ENCODE measurements at regions of chr21 and their contacts with region 1.

Region 1: GRCh38 chr21:46144464-46145070 is 10.8 kb downstream of the FTCD start:
- DNase-seq: no peak
- H3K4me3 Mint-ChIP-seq: no peak overlapping the region
- H3K27ac Mint-ChIP-seq: peak overlapping the region; percentile 76
- H3K4me1 Mint-ChIP-seq: peaks cover 13% of the 10 kb centered on the region
- H3K27me3 Mint-ChIP-seq: no peaks in the 10 kb centered on the region

Region 2: GRCh38 chr21:45923146-45923545 is 221.4 kb before region 1 on chr21:
- CTCF ChIA-PET with region 1: no interaction called
- intact Hi-C with region 1: no loop called
- DNase-seq: peak; percentile 79
- H3K4me3 Mint-ChIP-seq: no peak overlapping the region
- H3K27ac Mint-ChIP-seq: no peak overlapping the region
- H3K4me1 Mint-ChIP-seq: peaks cover 22% of the 10 kb centered on the region
- H3K27me3 Mint-ChIP-seq: no peaks in the 10 kb centered on the region

Region 3: GRCh38 chr21:45973659-45974072 is 170.9 kb before region 1 on chr21:
- CTCF ChIA-PET with region 1: interaction called, 11 read pairs
- intact Hi-C with region 1: loop called (anchors 1 kb)
- DNase-seq: peak; percentile 93
- H3K4me3 Mint-ChIP-seq: peak overlapping the region; percentile 70
- H3K27ac Mint-ChIP-seq: peak overlapping the region; percentile 66
- H3K4me1 Mint-ChIP-seq: peaks cover 20% of the 10 kb centered on the region
- H3K27me3 Mint-ChIP-seq: peaks cover 16% of the 10 kb centered on the region

Region 4: DNA sequence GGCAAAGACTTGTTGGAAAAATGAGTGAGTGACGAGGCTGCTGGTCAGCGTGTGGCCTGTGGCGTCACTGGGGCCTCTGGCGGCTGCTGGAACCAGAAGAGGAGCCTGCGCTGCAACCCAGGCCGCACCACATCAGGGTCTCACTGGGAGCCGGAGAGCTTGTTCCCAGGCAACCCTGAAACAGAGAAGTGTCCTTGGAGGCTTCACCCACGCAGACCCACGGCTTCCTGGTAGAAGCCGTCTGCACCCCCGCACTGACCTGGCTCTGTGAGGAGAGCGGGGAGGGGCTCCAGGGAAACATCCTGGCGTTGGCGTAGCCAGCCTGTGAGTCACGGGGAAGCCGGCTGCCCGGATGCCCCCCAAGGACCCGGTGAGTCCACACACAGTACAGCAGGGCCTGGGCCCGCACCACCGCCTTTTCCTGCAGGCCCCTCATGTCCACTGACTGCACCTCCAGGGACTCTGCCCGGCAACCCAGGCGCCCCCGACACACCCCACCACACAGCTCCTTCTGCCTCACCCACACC is 105.6 kb before region 1 on chr21:
- CTCF ChIA-PET with region 1: no interaction called
- intact Hi-C with region 1: no loop called
- DNase-seq: no peak
- H3K4me3 Mint-ChIP-seq: no peak overlapping the region
- H3K27ac Mint-ChIP-seq: no peak overlapping the region
- H3K4me1 Mint-ChIP-seq: no peaks in the 10 kb centered on the region
- H3K27me3 Mint-ChIP-seq: peaks cover 3% of the 10 kb centered on the region

Region 5: GRCh38 chr21:46184625-46185555 is 40.3 kb after region 1 on chr21:
- CTCF ChIA-PET with region 1: no interaction called
- intact Hi-C with region 1: loop called (anchors 2 kb)
- DNase-seq: peak; percentile 66
- H3K4me3 Mint-ChIP-seq: peak overlapping the region; percentile 82
- H3K27ac Mint-ChIP-seq: peak overlapping the region; percentile 73
- H3K4me1 Mint-ChIP-seq: peaks cover 6% of the 10 kb centered on the region
- H3K27me3 Mint-ChIP-seq: no peaks in the 10 kb centered on the region

Region 6: DNA sequence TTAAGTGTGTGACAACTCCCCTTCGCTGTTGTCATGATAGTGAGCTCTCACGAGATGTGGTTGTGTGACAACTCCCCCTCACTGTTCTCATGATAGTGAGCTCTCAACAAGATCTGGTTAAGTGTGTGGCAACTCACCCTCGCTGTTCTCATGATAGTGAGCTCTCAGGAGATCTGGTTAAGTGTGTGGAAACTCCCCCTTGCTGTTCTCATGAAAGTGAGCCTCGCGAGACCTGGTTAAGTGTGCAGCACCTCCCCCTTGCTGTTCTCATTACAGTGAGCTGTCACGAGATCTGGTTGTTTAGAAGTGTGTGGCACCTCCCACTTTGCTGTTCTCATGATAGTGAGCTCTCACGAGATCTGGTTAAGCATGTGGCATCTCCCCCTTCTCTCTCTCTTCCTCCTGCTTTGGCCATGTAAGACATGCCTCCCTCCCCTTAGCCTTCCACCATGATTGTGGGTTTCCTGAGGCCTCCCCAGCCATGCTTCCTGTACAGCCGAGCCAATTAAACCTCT is 109.1 kb after region 1 on chr21:
- CTCF ChIA-PET with region 1: interaction called, 10 read pairs
- intact Hi-C with region 1: loop called (anchors 1 kb)
- DNase-seq: peak; percentile 82
- H3K4me3 Mint-ChIP-seq: no peak overlapping the region
- H3K27ac Mint-ChIP-seq: peak overlapping the region; percentile 86
- H3K4me1 Mint-ChIP-seq: peaks cover 34% of the 10 kb centered on the region
- H3K27me3 Mint-ChIP-seq: no peaks in the 10 kb centered on the region

Region 7: GRCh38 chr21:46458315-46459023 is 313.9 kb after region 1 on chr21 and contains the start of gene DIP2A:
- CTCF ChIA-PET with region 1: no interaction called
- intact Hi-C with region 1: loop called (anchors 2 kb)
- DNase-seq: peak; percentile 94
- H3K4me3 Mint-ChIP-seq: peak within 1 kb of the TSS; percentile 83
- H3K27ac Mint-ChIP-seq: peak within 1 kb of the TSS; percentile 86
- H3K4me1 Mint-ChIP-seq: peaks cover 36% of the 10 kb centered on the region
- H3K27me3 Mint-ChIP-seq: no peaks in the 10 kb centered on the region
- total RNA-seq, gene DIP2A: 31.4 to 32.7 TPM